Colonic mucosa (tissue), 4 donors: ENCODE measurements at regions of chr9 and their contacts with region 1.

Region 1: DNA sequence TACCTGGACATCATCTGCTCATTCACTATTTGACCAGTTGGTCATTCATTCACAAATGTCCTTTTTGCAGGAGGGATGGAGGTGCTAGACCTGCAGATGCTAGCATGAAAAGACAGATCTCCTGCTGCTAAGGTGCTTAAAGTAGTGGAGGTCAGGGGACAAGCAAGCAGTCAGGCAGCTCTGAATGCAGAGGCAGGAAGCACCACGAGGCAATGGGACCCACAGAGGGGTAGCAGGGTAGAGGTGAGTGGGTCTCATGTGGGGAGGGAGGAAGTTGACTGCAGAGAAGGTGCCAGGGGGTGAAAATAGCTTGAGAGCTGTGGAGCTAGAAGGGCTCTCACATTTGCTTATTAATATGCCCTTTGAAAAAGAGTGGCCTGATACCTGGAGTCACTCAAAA is 25.2 kb downstream of the FXN start:
- DNase-seq: no peak
- H3K4me3 ChIP-seq: no peak overlapping the region
- H3K27ac ChIP-seq: no peak overlapping the region
- H3K4me1 ChIP-seq: no peaks in the 10 kb centered on the region
- H3K27me3 ChIP-seq: no peaks in the 10 kb centered on the region
- CTCF ChIP-seq: no peak

Region 2: GRCh38 chr9:69149321-69149807 is 88.6 kb after region 1 on chr9:
- intact Hi-C with region 1: loop called (anchors 5 kb)
- DNase-seq: no peak
- H3K4me3 ChIP-seq: no peak overlapping the region
- H3K27ac ChIP-seq: no peak overlapping the region
- H3K4me1 ChIP-seq: no peaks in the 10 kb centered on the region
- H3K27me3 ChIP-seq: no peaks in the 10 kb centered on the region
- CTCF ChIP-seq: no peak